Activated CD4-positive, alpha-beta T cell treated with anti-CD3 and anti-CD28 coated beads, Interleukin-2, amount 10 ng/mL, durations not matched to agents 24 days and 14 days (primary cell): ENCODE measurements at regions of chr7 and their contacts with region 1.

Region 1: GRCh38 chr7:71733107-71733870 is 601.3 kb downstream of the GALNT17 start:
- DNase-seq: peak; percentile 86
- H3K4me3 Mint-ChIP-seq: no peak overlapping the region
- H3K27ac Mint-ChIP-seq: no peak overlapping the region
- H3K4me1 Mint-ChIP-seq: no peaks in the 10 kb centered on the region
- H3K27me3 Mint-ChIP-seq: no peaks in the 10 kb centered on the region

Region 2: GRCh38 chr7:70829221-70830059 is 903.8 kb before region 1 on chr7:
- intact Hi-C with region 1: loop called (anchors 1 kb)
- DNase-seq: peak; percentile 88
- H3K4me3 Mint-ChIP-seq: peak overlapping the region; percentile 58
- H3K27ac Mint-ChIP-seq: no peak overlapping the region
- H3K4me1 Mint-ChIP-seq: peaks cover 5% of the 10 kb centered on the region
- H3K27me3 Mint-ChIP-seq: peaks cover 3% of the 10 kb centered on the region

Region 3: DNA sequence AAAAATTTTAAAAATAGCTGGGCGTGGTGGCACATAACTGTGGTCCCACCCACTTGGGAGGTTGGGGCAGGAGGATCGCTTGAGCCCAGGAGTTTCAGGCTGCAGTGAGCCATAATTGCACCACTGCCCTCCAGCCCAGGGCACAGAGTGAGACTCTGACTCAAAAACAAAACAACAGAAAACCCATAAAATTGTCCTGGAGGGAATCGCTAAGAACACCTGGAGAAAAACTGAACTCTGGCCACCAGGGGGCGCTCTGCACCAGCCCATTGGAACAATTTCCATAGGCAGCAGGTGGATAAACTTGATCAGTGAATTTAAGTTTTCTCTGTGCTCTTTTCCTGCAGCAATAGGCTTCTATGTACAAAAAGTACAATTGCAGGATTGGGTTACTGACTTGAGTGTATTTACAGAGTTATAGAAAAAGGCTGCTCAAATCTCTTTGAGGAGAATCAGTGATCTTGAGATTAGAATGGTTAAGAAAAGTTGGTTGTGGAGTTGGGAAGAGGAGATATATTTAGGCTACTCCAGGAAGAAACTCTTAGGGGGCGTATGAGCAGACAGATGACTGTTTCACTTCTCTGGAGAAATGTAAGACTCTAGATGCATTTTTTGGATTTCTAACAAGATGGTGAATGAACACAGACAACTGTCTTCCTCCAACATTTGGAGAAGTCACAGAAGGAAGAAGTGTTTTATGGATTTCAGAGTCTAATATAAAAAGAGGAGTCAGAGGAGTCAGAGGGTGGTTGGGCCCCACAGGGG is 876.2 kb before region 1 on chr7:
- intact Hi-C with region 1: loop called (anchors 2 kb)
- DNase-seq: peak; percentile 84
- H3K4me3 Mint-ChIP-seq: no peak overlapping the region
- H3K27ac Mint-ChIP-seq: no peak overlapping the region
- H3K4me1 Mint-ChIP-seq: no peaks in the 10 kb centered on the region
- H3K27me3 Mint-ChIP-seq: no peaks in the 10 kb centered on the region

Region 4: GRCh38 chr7:71752171-71752935 is 19.1 kb after region 1 on chr7:
- intact Hi-C with region 1: no loop called
- DNase-seq: peak; percentile 81
- H3K4me3 Mint-ChIP-seq: no peak overlapping the region
- H3K27ac Mint-ChIP-seq: no peak overlapping the region
- H3K4me1 Mint-ChIP-seq: no peaks in the 10 kb centered on the region
- H3K27me3 Mint-ChIP-seq: no peaks in the 10 kb centered on the region

Region 5: GRCh38 chr7:72017756-72018155 is 284.5 kb after region 1 on chr7:
- intact Hi-C with region 1: no loop called
- DNase-seq: no peak
- H3K4me3 Mint-ChIP-seq: no peak overlapping the region
- H3K27ac Mint-ChIP-seq: no peak overlapping the region
- H3K4me1 Mint-ChIP-seq: no peaks in the 10 kb centered on the region
- H3K27me3 Mint-ChIP-seq: no peaks in the 10 kb centered on the region